A673 (cell line): ENCODE measurements at regions of chr2 and their contacts with region 1.

Region 1: GRCh38 chr2:108607706-108608301 is 73.5 kb downstream of the LIMS1 start:
- DNase-seq: peak; percentile 61
- H3K4me3 ChIP-seq: no peak overlapping the region
- H3K27ac ChIP-seq: no peak overlapping the region
- H3K4me1 ChIP-seq: no peaks in the 10 kb centered on the region
- H3K27me3 ChIP-seq: no peaks in the 10 kb centered on the region
- CTCF ChIP-seq: peak; percentile 71

Region 2: GRCh38 chr2:108719149-108720044 is 111.6 kb after region 1 on chr2 and contains the start of gene RANBP2:
- CTCF ChIA-PET with region 1: no interaction called
- POLR2A ChIA-PET with region 1: no interaction called
- intact Hi-C with region 1: loop called (anchors 1 kb)
- DNase-seq: peak; percentile 98
- H3K4me3 ChIP-seq: peak within 1 kb of the TSS; percentile 81
- H3K27ac ChIP-seq: peak within 1 kb of the TSS; percentile 95
- H3K4me1 ChIP-seq: no peaks in the 10 kb centered on the region
- H3K27me3 ChIP-seq: no peaks in the 10 kb centered on the region
- CTCF ChIP-seq: no peak
- total RNA-seq, gene RANBP2: 78.2 and 92.3 TPM in 2 replicates